Right ventricle myocardium inferior (tissue), 1 donor: ENCODE measurements at regions of chr1 and their contacts with region 1.

Region 1: GRCh38 chr1:245926888-245927287 is 580.2 kb downstream of the SMYD3 start:
- DNase-seq: no peak
- ATAC-seq: no peak

Region 2: GRCh38 chr1:245871915-245872314 is 55.0 kb before region 1 on chr1:
- intact Hi-C with region 1: no loop called
- DNase-seq: no peak
- ATAC-seq: no peak

Region 3: GRCh38 chr1:245990315-245991022 is 63.6 kb after region 1 on chr1:
- intact Hi-C with region 1: loop called (anchors 2 kb)
- DNase-seq: no peak
- ATAC-seq: no peak